ENCODE measurements at regions of chr13 and their contacts with region 1.

Region 1: GRCh38 chr13:31742097-31742734 is 2.9 kb downstream of the RXFP2 start:
- DNase-seq: no peak
- H3K4me3 ChIP-seq: no peak overlapping the region
- H3K27ac ChIP-seq: no peak overlapping the region
- H3K4me1 ChIP-seq: peaks cover 0 to 6% (median 0%) of the 10 kb centered on the region in 3 donors
- H3K27me3 ChIP-seq: no peaks in the 10 kb centered on the region
- CTCF ChIP-seq: peak; percentile 73 to 99 (median 89)
- POLR2A ChIP-seq: no peak

Region 2: GRCh38 chr13:31431722-31432137 is 310.5 kb before region 1 on chr13:
- intact Hi-C with region 1: loop called (anchors 5 kb)
- DNase-seq: no peak
- H3K4me3 ChIP-seq: no peak overlapping the region
- H3K27ac ChIP-seq: no peak overlapping the region
- H3K4me1 ChIP-seq: no peaks in the 10 kb centered on the region
- H3K27me3 ChIP-seq: no peaks in the 10 kb centered on the region
- CTCF ChIP-seq: peak; percentile 28 to 94 (median 52)
- POLR2A ChIP-seq: no peak

Region 3: GRCh38 chr13:31625115-31625514 is 117.1 kb before region 1 on chr13:
- intact Hi-C with region 1: no loop called
- DNase-seq: no peak
- H3K4me3 ChIP-seq: no peak overlapping the region
- H3K27ac ChIP-seq: no peak overlapping the region
- H3K4me1 ChIP-seq: no peaks in the 10 kb centered on the region
- H3K27me3 ChIP-seq: peaks cover 0 to 4% (median 0%) of the 10 kb centered on the region in 4 donors
- CTCF ChIP-seq: no peak
- POLR2A ChIP-seq: no peak